Endothelial cell of umbilical vein (primary cell): ENCODE measurements at regions of chr18 and their contacts with region 1.

Region 1: GRCh38 chr18:23302851-23303527 is 150.1 kb upstream of the RIOK3 start:
- DNase-seq: peak; percentile 98
- H3K4me3 ChIP-seq: no peak overlapping the region
- H3K27ac ChIP-seq: peak overlapping the region; percentile 88
- H3K4me1 ChIP-seq: peaks cover 44% of the 10 kb centered on the region
- H3K27me3 ChIP-seq: no peaks in the 10 kb centered on the region
- CTCF ChIP-seq: no peak
- POLR2A ChIP-seq: peak; percentile 75

Region 2: GRCh38 chr18:23270986-23271680 is 31.9 kb before region 1 on chr18:
- CTCF ChIA-PET with region 1: interaction called, 3 read pairs
- POLR2A ChIA-PET with region 1: no interaction called
- dilution Hi-C with region 1: no loop called
- intact Hi-C with region 1: loop called (anchors 1 kb)
- DNase-seq: peak; percentile 71
- H3K4me3 ChIP-seq: no peak overlapping the region
- H3K27ac ChIP-seq: peak overlapping the region; percentile 25
- H3K4me1 ChIP-seq: peaks cover 14% of the 10 kb centered on the region
- H3K27me3 ChIP-seq: no peaks in the 10 kb centered on the region
- CTCF ChIP-seq: no peak
- POLR2A ChIP-seq: no peak

Region 3: DNA sequence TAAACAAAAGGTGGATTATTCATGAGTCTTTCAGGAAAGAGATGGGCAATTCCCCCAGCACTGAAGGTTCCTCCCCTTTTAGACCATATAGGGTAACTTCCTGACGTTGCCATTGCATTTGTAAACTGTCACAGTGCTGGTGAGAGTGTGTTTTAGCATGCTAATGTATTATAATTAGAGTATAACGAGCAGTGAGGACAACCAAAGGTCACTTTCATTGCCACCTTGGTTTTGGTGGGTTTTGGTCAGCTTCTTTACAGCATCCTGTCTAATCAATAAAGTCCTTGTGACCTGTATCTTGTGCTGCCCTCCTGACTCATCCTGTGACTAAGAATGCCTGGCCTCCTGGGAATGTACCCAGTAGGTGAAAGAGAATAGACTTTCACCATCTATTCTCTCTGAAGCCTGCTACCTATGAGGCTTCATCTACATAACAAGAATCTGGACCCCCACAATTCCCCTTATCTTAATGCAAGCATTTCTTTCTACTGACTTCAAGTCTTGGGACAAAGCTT is 19.0 kb before region 1 on chr18:
- CTCF ChIA-PET with region 1: no interaction called
- POLR2A ChIA-PET with region 1: interaction called, 3 read pairs
- dilution Hi-C with region 1: no loop called
- intact Hi-C with region 1: loop called (anchors 1 kb)
- DNase-seq: peak; percentile 52
- H3K4me3 ChIP-seq: no peak overlapping the region
- H3K27ac ChIP-seq: no peak overlapping the region
- H3K4me1 ChIP-seq: peaks cover 41% of the 10 kb centered on the region
- H3K27me3 ChIP-seq: no peaks in the 10 kb centered on the region
- CTCF ChIP-seq: no peak
- POLR2A ChIP-seq: no peak

Region 4: GRCh38 chr18:23401400-23402347 is 98.7 kb after region 1 on chr18:
- CTCF ChIA-PET with region 1: no interaction called
- POLR2A ChIA-PET with region 1: no interaction called
- dilution Hi-C with region 1: no loop called
- intact Hi-C with region 1: loop called (anchors 1 kb)
- DNase-seq: peak; percentile 97
- H3K4me3 ChIP-seq: no peak overlapping the region
- H3K27ac ChIP-seq: peak overlapping the region; percentile 92
- H3K4me1 ChIP-seq: peaks cover 22% of the 10 kb centered on the region
- H3K27me3 ChIP-seq: no peaks in the 10 kb centered on the region
- CTCF ChIP-seq: no peak
- POLR2A ChIP-seq: peak; percentile 80

Region 5: GRCh38 chr18:23437357-23438045 is 134.5 kb after region 1 on chr18:
- CTCF ChIA-PET with region 1: no interaction called
- POLR2A ChIA-PET with region 1: no interaction called
- dilution Hi-C with region 1: no loop called
- intact Hi-C with region 1: no loop called
- DNase-seq: peak; percentile 71
- H3K4me3 ChIP-seq: peak overlapping the region; percentile 25 to 98 (median 76)
- H3K27ac ChIP-seq: peak overlapping the region; percentile 1
- H3K4me1 ChIP-seq: peaks cover 4% of the 10 kb centered on the region
- H3K27me3 ChIP-seq: no peaks in the 10 kb centered on the region
- CTCF ChIP-seq: no peak
- POLR2A ChIP-seq: peak; percentile 67